ENCODE measurements at regions of chr9 and their contacts with region 1.

Region 1: GRCh38 chr9:71768388-71769174 is at the start of gene CEMIP2:
- DNase-seq: peak; percentile 94
- H3K4me3 Mint-ChIP-seq: peak within 1 kb of the TSS; percentile 89
- H3K27ac Mint-ChIP-seq: peak within 1 kb of the TSS; percentile 96
- H3K4me1 Mint-ChIP-seq: peaks cover 37% of the 10 kb centered on the region
- H3K27me3 Mint-ChIP-seq: no peaks in the 10 kb centered on the region

Region 2: DNA sequence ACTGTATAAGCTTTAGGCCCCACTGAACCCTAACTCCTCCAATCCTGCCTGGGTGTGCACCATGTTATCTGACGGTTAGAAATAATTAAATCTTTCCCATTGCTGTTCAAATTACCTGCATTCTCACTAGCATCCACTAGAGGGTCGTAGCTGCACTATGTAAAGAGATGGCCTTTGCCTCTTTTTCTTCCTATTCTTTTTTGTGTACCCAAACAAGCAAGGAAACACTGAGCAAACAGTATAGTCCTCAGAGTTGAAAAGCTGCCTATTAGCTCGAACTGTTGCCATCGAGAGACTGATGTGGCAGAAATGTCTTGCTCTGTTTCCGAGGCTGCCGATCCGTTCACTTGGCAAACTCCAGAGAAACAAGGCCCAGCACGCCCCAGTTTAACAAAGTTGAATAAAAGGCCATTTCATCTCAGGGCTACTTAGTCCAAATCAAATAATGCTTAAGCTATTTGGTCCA is 483.4 kb before region 1 on chr9:
- CTCF ChIA-PET with region 1: interaction called, 18 read pairs
- DNase-seq: peak; percentile 39
- H3K4me3 Mint-ChIP-seq: no peak overlapping the region
- H3K27ac Mint-ChIP-seq: no peak overlapping the region
- H3K4me1 Mint-ChIP-seq: no peaks in the 10 kb centered on the region
- H3K27me3 Mint-ChIP-seq: peaks cover 5% of the 10 kb centered on the region

Region 3: GRCh38 chr9:71604197-71605063 is 164.2 kb before region 1 on chr9:
- CTCF ChIA-PET with region 1: interaction called, 18 read pairs
- DNase-seq: peak; percentile 87
- H3K4me3 Mint-ChIP-seq: no peak overlapping the region
- H3K27ac Mint-ChIP-seq: no peak overlapping the region
- H3K4me1 Mint-ChIP-seq: no peaks in the 10 kb centered on the region
- H3K27me3 Mint-ChIP-seq: peaks cover 6% of the 10 kb centered on the region

Region 4: GRCh38 chr9:71628247-71628646 is 140.3 kb before region 1 on chr9:
- CTCF ChIA-PET with region 1: interaction called, 10 read pairs
- DNase-seq: no peak
- H3K4me3 Mint-ChIP-seq: no peak overlapping the region
- H3K27ac Mint-ChIP-seq: no peak overlapping the region
- H3K4me1 Mint-ChIP-seq: peaks cover 24% of the 10 kb centered on the region
- H3K27me3 Mint-ChIP-seq: peaks cover 26% of the 10 kb centered on the region

Region 5: DNA sequence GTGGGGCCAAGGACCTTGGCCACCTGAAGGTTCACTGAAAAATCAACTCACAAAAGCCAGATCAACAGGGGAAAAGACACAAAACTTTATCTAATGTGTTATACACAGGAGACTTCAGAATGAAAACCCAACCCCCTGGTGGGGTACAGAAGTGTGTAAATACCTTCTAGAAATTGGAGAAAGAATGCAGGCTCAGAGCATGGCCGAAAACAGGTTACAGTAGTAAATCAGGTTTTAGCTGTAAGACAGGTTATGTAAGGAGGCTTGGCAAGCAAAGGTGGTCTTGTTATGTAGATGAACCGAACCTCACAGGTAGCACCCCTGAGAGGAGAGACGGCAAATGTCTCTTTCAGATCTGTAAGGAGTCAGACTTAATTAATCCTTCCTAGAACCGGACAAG is 10.3 kb before region 1 on chr9:
- CTCF ChIA-PET with region 1: no interaction called
- DNase-seq: no peak
- H3K4me3 Mint-ChIP-seq: no peak overlapping the region
- H3K27ac Mint-ChIP-seq: peak overlapping the region; percentile 37
- H3K4me1 Mint-ChIP-seq: peaks cover 66% of the 10 kb centered on the region
- H3K27me3 Mint-ChIP-seq: no peaks in the 10 kb centered on the region

Region 6: GRCh38 chr9:71783120-71783530 is 14.5 kb after region 1 on chr9:
- CTCF ChIA-PET with region 1: interaction called, 18 read pairs
- DNase-seq: peak; percentile 91
- H3K4me3 Mint-ChIP-seq: peak overlapping the region; percentile 54
- H3K27ac Mint-ChIP-seq: peak overlapping the region; percentile 99
- H3K4me1 Mint-ChIP-seq: peaks cover 48% of the 10 kb centered on the region
- H3K27me3 Mint-ChIP-seq: no peaks in the 10 kb centered on the region

Region 7: GRCh38 chr9:71984403-71984802 is 215.8 kb after region 1 on chr9:
- CTCF ChIA-PET with region 1: no interaction called
- DNase-seq: no peak
- H3K4me3 Mint-ChIP-seq: no peak overlapping the region
- H3K27ac Mint-ChIP-seq: no peak overlapping the region
- H3K4me1 Mint-ChIP-seq: no peaks in the 10 kb centered on the region
- H3K27me3 Mint-ChIP-seq: no peaks in the 10 kb centered on the region

Measured in activated naive CD4-positive, alpha-beta T cell treated with anti-CD3 and anti-CD28 coated beads, Interleukin-2, amount 10 ng/mL, durations not matched to agents 7 days and 5 days (primary cell).